ENCODE measurements at regions of chr4 and their contacts with region 1.

Region 1: GRCh38 chr4:131192318-131192717 is 1956.8 kb upstream of the PCDH10 start:
- DNase-seq: no peak
- ATAC-seq: no peak
- H3K4me3 ChIP-seq: no peak overlapping the region
- H3K27ac ChIP-seq: no peak overlapping the region
- H3K4me1 ChIP-seq: no peaks in the 10 kb centered on the region
- H3K27me3 ChIP-seq: no peaks in the 10 kb centered on the region
- CTCF ChIP-seq: no peak
- POLR2A ChIP-seq: no peak
- RAD21 ChIP-seq: no peak

Region 2: DNA sequence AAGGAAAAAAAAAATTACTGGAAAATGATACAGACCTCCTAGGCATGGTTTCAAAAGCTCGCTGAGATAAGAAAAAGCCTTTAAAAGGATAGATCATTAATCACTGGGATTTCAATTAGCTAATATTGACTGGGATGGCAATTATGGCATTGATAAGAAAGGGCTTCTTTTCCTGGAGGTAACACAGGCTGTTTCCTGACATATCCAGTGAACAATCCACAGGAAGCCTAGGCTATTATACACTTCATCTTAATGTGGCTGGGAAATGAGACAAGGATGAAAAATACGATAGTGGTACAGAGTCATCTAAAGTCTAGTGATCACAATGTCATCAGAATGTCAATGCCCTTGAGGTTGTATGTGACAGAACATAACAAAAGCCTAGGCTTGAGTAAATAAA is 517.1 kb before region 1 on chr4:
- CTCF ChIA-PET with region 1: interaction called, 11 read pairs
- POLR2A ChIA-PET with region 1: no interaction called
- dilution Hi-C with region 1: no loop called
- in situ Hi-C with region 1: no loop called
- intact Hi-C with region 1: no loop called
- DNase-seq: no peak
- ATAC-seq: no peak
- H3K4me3 ChIP-seq: no peak overlapping the region
- H3K27ac ChIP-seq: no peak overlapping the region
- H3K4me1 ChIP-seq: no peaks in the 10 kb centered on the region
- H3K27me3 ChIP-seq: no peaks in the 10 kb centered on the region
- CTCF ChIP-seq: no peak
- POLR2A ChIP-seq: no peak
- RAD21 ChIP-seq: no peak

Measured in IMR-90 (cell line).